ENCODE measurements at regions of chr5 and their contacts with region 1.

Region 1: GRCh38 chr5:91049800-91050199 is 333.3 kb downstream of the ARRDC3 start:
- DNase-seq: peak; percentile 86
- ATAC-seq: peak; percentile 74
- H3K4me3 ChIP-seq: peak overlapping the region; percentile 20; the same call in 1 of the 2 replicates
- H3K27ac ChIP-seq: peak overlapping the region; percentile 92
- H3K4me1 ChIP-seq: peaks cover 53% of the 10 kb centered on the region
- H3K27me3 ChIP-seq: no peaks in the 10 kb centered on the region
- CTCF ChIP-seq: no peak

Region 2: GRCh38 chr5:90888511-90889324 is 161.1 kb before region 1 on chr5:
- CTCF ChIA-PET with region 1: no interaction called
- POLR2A ChIA-PET with region 1: no interaction called
- intact Hi-C with region 1: loop called (anchors 1 kb)
- DNase-seq: peak; percentile 93
- ATAC-seq: peak; percentile 77
- H3K4me3 ChIP-seq: peak overlapping the region; percentile 41
- H3K27ac ChIP-seq: peak overlapping the region; percentile 98
- H3K4me1 ChIP-seq: peaks cover 67% of the 10 kb centered on the region
- H3K27me3 ChIP-seq: no peaks in the 10 kb centered on the region
- CTCF ChIP-seq: no peak

Region 3: DNA sequence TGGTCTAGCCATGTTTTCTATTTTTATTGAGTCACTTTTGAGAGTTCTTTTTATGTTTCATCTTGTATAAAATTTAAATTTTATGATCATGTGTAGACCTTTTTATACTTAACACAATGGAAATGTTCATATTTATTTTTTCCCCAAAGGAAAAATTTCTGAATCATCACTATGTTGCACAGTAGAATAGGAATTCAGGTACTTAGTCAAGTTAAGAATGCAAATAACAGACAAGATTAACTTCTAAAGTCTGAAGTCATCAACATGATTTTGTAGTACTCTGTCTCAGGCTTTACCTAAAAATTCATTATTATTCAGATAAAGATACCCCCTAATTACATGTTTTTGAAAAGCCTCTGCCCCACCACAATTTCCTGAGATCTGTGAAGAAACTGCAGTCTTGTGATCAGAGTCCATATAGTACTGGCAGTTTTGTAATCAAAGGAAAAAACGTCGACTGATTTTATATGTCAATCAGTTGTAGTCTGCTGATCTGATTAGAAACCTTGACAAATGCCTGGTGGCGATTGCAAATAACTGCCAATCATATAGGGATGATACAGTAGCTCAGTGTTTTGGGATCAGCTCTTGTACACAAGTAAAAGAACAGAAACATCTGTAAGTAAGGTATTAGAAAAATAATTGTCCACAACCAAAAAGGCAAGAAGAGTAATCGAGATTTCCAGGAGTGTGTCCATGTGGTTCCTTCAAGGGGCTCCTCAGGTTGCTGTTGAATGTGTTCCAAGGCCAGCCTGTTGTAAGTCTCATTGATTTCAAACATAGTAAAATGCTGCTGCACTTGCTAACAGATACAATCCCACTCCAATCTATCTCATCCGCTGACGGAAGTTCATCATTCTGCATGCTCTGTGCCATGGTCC is 19.0 kb before region 1 on chr5:
- CTCF ChIA-PET with region 1: no interaction called
- POLR2A ChIA-PET with region 1: no interaction called
- intact Hi-C with region 1: loop called (anchors 2 kb)
- DNase-seq: peak; percentile 59
- ATAC-seq: peak; percentile 78
- H3K4me3 ChIP-seq: no peak overlapping the region
- H3K27ac ChIP-seq: peak overlapping the region; percentile 25
- H3K4me1 ChIP-seq: peaks cover 20% of the 10 kb centered on the region
- H3K27me3 ChIP-seq: no peaks in the 10 kb centered on the region
- CTCF ChIP-seq: no peak

Region 4: DNA sequence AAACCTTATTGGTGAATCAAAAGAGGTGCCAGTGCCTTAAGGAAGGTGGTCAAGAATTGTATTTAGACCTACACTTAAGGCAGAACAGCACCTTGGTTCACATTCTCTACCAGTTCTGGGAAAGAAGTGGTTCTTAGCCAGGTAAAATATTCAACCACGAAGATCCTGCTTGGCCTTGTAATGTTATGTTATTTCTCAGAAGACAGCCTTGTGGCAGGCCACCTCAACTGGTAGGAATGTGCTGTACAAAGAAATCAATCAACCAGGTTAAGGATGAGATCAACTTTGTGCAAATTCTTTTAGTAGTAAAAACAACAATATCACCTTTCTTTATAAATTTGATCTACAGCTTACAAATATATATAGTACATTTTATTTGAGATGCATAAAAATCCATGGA is 86.5 kb after region 1 on chr5:
- CTCF ChIA-PET with region 1: no interaction called
- POLR2A ChIA-PET with region 1: no interaction called
- intact Hi-C with region 1: loop called (anchors 5 kb)
- DNase-seq: peak; percentile 91
- ATAC-seq: peak; percentile 98
- H3K4me3 ChIP-seq: no peak overlapping the region
- H3K27ac ChIP-seq: peak overlapping the region; percentile 64
- H3K4me1 ChIP-seq: peaks cover 51% of the 10 kb centered on the region
- H3K27me3 ChIP-seq: no peaks in the 10 kb centered on the region
- CTCF ChIP-seq: peak; percentile 30; the same call in 1 of the 2 replicates